ENCODE measurements at regions of chr6 and their contacts with region 1.

Region 1: DNA sequence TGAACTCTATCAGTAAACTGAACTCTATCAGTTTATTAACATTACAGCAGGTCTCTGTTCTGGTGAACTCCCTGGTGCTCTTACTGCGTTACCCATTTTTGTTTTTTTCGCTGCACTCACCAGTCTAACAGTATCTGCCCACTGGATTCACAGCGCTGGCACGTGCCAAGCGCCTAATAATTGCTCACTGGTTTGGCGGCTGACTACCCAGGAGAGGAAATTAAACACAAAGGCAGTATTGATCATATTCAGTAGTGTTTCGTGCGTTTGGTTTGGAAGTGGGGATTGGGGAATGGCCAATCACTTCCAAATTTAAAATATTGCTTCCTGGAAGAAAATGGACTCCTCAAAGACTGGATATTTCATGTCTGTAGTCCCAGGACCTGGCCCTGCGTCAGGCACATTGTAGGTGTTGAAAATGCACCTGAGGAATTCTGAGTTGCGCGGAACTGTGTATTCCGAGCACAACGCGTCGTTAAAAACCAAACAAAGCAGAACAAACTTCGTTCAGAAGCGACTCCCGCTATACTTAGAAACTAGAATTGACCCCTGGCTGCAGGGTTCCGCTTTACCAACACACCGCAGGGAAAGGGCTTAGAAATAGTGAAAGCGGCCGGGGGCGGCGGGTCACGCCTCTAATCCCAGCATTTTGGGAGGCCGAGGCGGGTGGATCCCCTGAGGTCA is 1.1 kb upstream of the RPS12 start:
- DNase-seq: peak in 28 of 35 experiments; percentile 6 to 74 (median 24)
- ATAC-seq: peak; percentile 4 to 28 (median 20)
- H3K4me3 ChIP-seq: peak overlapping the region; percentile 86 to 100
- H3K4me3 Mint-ChIP-seq: peak overlapping the region; percentile 98 to 100 (median 98)
- H3K27ac ChIP-seq: peak overlapping the region; percentile 96
- H3K27ac Mint-ChIP-seq: peak overlapping the region; percentile 99 to 100
- H3K4me1 ChIP-seq: peaks cover 23 to 29% of the 10 kb centered on the region in 2 experiments
- H3K4me1 Mint-ChIP-seq: peaks cover 42 to 57% (median 47%) of the 10 kb centered on the region in 3 donors
- H3K27me3 ChIP-seq: no peaks in the 10 kb centered on the region
- H3K27me3 Mint-ChIP-seq: no peaks in the 10 kb centered on the region

Region 2: GRCh38 chr6:133585978-133586377 is 772.7 kb after region 1 on chr6:
- CTCF ChIA-PET with region 1: no interaction called
- POLR2A ChIA-PET with region 1: interaction called in 1 of 2 experiments, 10 read pairs
- DNase-seq: no peak
- ATAC-seq: no peak
- H3K4me3 ChIP-seq: no peak overlapping the region
- H3K4me3 Mint-ChIP-seq: no peak overlapping the region
- H3K27ac ChIP-seq: no peak overlapping the region
- H3K27ac Mint-ChIP-seq: no peak overlapping the region
- H3K4me1 ChIP-seq: no peaks in the 10 kb centered on the region
- H3K4me1 Mint-ChIP-seq: no peaks in the 10 kb centered on the region
- H3K27me3 ChIP-seq: no peaks in the 10 kb centered on the region
- H3K27me3 Mint-ChIP-seq: no peaks in the 10 kb centered on the region